ENCODE measurements at regions of chr5 and their contacts with region 1.

Region 1: GRCh38 chr5:146507428-146507827 is 8.6 kb downstream of the GPR151 start:
- DNase-seq: no peak
- ATAC-seq: no peak
- H3K4me3 ChIP-seq: no peak overlapping the region
- H3K27ac ChIP-seq: no peak overlapping the region
- H3K4me1 ChIP-seq: no peaks in the 10 kb centered on the region
- H3K27me3 ChIP-seq: no peaks in the 10 kb centered on the region
- CTCF ChIP-seq: no peak
- EP300 ChIP-seq: no peak
- POLR2A ChIP-seq: no peak
- RAD21 ChIP-seq: no peak

Region 2: DNA sequence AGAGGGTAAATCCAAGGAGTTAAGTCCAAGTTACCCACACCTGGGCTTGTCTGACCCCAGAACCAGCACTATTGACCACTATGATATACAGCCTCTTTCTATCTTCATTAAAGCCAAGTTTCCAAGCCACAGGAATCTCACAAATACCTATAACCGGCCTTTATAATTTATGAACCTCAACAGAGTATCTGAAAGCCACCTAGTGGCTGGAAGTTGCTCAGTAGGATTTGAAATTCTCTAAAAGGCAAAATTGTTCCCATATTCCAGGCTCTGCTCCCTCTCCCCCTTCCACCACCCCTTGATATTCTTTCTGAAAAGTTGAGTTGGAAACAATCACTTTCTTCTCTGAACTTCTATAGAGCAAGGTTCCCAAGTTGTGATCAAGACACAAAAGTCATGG is 115.0 kb after region 1 on chr5:
- CTCF ChIA-PET with region 1: no interaction called
- POLR2A ChIA-PET with region 1: no interaction called
- in situ Hi-C with region 1: no loop called
- intact Hi-C with region 1: no loop called
- DNase-seq: no peak
- ATAC-seq: no peak
- H3K4me3 ChIP-seq: no peak overlapping the region
- H3K27ac ChIP-seq: no peak overlapping the region
- H3K4me1 ChIP-seq: no peaks in the 10 kb centered on the region
- H3K27me3 ChIP-seq: no peaks in the 10 kb centered on the region
- CTCF ChIP-seq: peak in 2 of 3 experiments; percentile 12 to 23; a peak in 1 of 6 replicates
- EP300 ChIP-seq: no peak
- POLR2A ChIP-seq: no peak
- RAD21 ChIP-seq: no peak

Region 3: DNA sequence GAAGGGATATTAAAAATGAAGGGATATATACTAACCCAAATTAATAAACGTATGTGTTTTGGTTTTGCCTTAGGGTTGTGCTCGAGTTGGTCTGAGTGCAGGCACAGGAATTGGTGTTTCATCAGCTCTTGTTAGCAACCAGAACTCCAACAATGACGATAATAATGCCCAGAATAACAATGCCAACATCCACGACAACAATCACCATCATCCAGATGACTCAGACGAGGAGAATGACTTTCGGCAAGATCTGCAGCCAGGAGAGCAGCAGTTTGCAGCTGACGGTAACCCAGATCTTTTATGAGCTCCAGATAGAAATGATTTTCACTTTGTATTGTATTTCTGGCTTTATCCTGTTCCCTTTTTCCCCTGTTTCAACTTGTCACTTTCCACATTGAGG is 1909.5 kb after region 1 on chr5:
- CTCF ChIA-PET with region 1: no interaction called
- POLR2A ChIA-PET with region 1: no interaction called
- in situ Hi-C with region 1: no loop called
- intact Hi-C with region 1: loop called (anchors 10 kb)
- DNase-seq: no peak
- ATAC-seq: no peak
- H3K4me3 ChIP-seq: no peak overlapping the region
- H3K27ac ChIP-seq: no peak overlapping the region
- H3K4me1 ChIP-seq: no peaks in the 10 kb centered on the region
- H3K27me3 ChIP-seq: no peaks in the 10 kb centered on the region
- CTCF ChIP-seq: no peak
- EP300 ChIP-seq: no peak
- POLR2A ChIP-seq: no peak
- RAD21 ChIP-seq: no peak